Dorsolateral prefrontal cortex (tissue), 120 donors: ENCODE measurements at regions of chr19 and their contacts with region 1.

Region 1: GRCh38 chr19:1360818-1361461 is 22.8 kb upstream of the NDUFS7 start:
- DNase-seq: peak; percentile 57 to 90 (median 85)
- H3K4me3 ChIP-seq: peak overlapping the region; percentile 0 to 62 (median 47)
- H3K27ac ChIP-seq: peak overlapping the region; percentile 47 to 94 (median 88)
- H3K27me3 ChIP-seq: no peaks in the 10 kb centered on the region
- CTCF ChIP-seq: peak in 28 of 56 donors; percentile 4 to 56 (median 32)

Region 2: GRCh38 chr19:1324806-1325567 is 36.0 kb before region 1 on chr19:
- intact Hi-C with region 1: no loop called
- DNase-seq: peak; percentile 53 to 81 (median 70)
- H3K4me3 ChIP-seq: peak overlapping the region; percentile 33 to 80 (median 65)
- H3K27ac ChIP-seq: peak overlapping the region in 42 of 59 donors; percentile 0 to 84 (median 46)
- H3K27me3 ChIP-seq: no peaks in the 10 kb centered on the region
- CTCF ChIP-seq: no peak

Region 3: DNA sequence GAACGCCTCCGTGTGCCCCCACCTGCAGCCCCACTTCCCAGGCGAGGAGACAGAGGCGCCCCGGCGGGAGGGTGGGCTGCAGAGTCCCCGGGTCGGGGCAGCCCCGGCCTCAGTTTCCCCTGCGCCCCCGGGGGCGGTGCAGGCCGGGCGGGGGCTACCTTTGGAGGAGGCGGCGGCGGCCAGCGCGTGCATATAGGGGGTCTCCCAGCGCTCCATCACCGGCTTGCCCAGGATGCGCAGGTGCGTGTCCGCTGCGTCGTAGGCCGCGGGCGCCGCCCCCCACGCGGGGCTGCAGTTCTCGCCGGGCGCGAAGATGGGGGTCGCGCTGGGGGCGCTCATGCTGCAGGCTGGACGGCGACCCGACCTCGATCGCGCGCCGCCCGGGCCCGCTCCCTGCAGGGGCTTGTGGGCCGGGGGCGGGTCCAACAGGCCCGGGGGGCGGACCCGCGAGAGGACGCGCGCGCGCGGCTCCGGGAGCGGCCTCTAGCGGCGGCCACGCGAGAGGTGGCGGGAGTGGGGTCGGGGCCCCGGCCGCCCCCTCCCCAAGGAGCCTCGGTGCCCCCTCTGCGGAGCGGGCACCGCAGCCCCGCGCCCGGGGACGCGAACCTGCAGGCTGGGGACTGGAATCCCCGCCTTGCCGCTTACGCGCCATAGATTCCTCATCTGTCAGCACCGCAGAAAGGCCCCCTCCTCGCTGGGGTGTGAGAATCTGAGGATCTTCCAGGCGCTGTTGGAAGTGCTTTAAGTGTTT is 40.4 kb after region 1 on chr19 and contains the start of gene GAMT:
- intact Hi-C with region 1: loop called in 1 of 2 experiments (anchors 1 kb)
- DNase-seq: peak in 3 of 10 donors; percentile 59 to 78 (median 60)
- H3K4me3 ChIP-seq: peak within 1 kb of the TSS; percentile 62 to 95 (median 84)
- H3K27ac ChIP-seq: peak within 1 kb of the TSS; percentile 22 to 97 (median 86)
- H3K27me3 ChIP-seq: no peaks in the 10 kb centered on the region
- CTCF ChIP-seq: peak in 55 of 56 donors; percentile 31 to 89 (median 68)
- total RNA-seq, gene GAMT: 30.0 to 91.1 (median 47.4) TPM